ENCODE measurements at regions of chr12 and their contacts with region 1.

Region 1: DNA sequence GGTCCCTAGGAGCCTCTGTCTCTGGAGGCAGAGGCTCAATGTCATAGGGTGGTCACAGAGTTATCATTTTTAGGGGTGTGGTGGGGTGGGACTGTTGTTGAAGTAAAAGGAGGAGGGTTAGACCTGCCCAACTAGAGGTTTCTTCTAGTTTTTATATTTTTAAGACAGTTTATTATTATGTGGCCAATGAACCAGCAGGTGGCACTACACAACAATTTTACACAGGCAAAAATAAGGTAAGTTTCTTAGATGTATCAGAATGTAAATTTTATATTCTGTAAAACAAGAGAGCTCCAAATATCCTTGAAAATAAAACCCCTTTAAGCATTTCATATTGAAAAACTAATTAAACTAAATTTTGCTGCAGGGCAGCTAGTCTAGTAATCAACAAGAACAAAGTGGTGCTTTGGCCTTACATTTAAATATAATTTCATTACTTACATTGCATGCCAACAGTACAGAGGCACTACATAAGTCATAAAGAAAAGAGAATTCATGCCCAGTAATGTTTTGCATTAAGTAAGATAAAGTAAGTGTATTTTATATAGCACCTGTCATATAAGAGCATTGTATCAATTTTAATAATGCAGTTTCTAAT is 22.2 kb upstream of the OVCH1 start:
- DNase-seq: no peak
- ATAC-seq: peak; percentile 71
- H3K4me3 ChIP-seq: no peak overlapping the region
- H3K27ac ChIP-seq: no peak overlapping the region
- H3K4me1 ChIP-seq: no peaks in the 10 kb centered on the region
- H3K27me3 ChIP-seq: no peaks in the 10 kb centered on the region
- CTCF ChIP-seq: peak; percentile 40 to 66 (median 52); a peak in 5 of 6 replicates
- EP300 ChIP-seq: no peak
- POLR2A ChIP-seq: no peak
- RAD21 ChIP-seq: peak; percentile 71

Region 2: GRCh38 chr12:29309320-29309902 is 210.3 kb before region 1 on chr12:
- CTCF ChIA-PET with region 1: interaction called, 11 read pairs
- POLR2A ChIA-PET with region 1: no interaction called
- RAD21 ChIA-PET with region 1: no interaction called
- SMC1A ChIA-PET with region 1: interaction called, 3 read pairs
- in situ Hi-C with region 1: no loop called
- intact Hi-C with region 1: no loop called
- DNase-seq: no peak
- ATAC-seq: no peak
- H3K4me3 ChIP-seq: no peak overlapping the region
- H3K27ac ChIP-seq: no peak overlapping the region
- H3K4me1 ChIP-seq: no peaks in the 10 kb centered on the region
- H3K27me3 ChIP-seq: no peaks in the 10 kb centered on the region
- CTCF ChIP-seq: peak in 2 of 3 experiments; percentile 2 to 21; a peak in 1 of 6 replicates
- EP300 ChIP-seq: no peak
- POLR2A ChIP-seq: no peak
- RAD21 ChIP-seq: peak; percentile 47

Region 3: GRCh38 chr12:29437575-29437974 is 82.1 kb before region 1 on chr12:
- CTCF ChIA-PET with region 1: no interaction called
- POLR2A ChIA-PET with region 1: no interaction called
- RAD21 ChIA-PET with region 1: no interaction called
- SMC1A ChIA-PET with region 1: no interaction called
- in situ Hi-C with region 1: no loop called
- intact Hi-C with region 1: no loop called
- DNase-seq: no peak
- ATAC-seq: no peak
- H3K4me3 ChIP-seq: no peak overlapping the region
- H3K27ac ChIP-seq: no peak overlapping the region
- H3K4me1 ChIP-seq: no peaks in the 10 kb centered on the region
- H3K27me3 ChIP-seq: no peaks in the 10 kb centered on the region
- CTCF ChIP-seq: no peak
- EP300 ChIP-seq: no peak
- POLR2A ChIP-seq: no peak
- RAD21 ChIP-seq: no peak

Region 4: GRCh38 chr12:29545102-29545467 is 25.4 kb after region 1 on chr12:
- CTCF ChIA-PET with region 1: interaction called, 19 read pairs
- POLR2A ChIA-PET with region 1: no interaction called
- RAD21 ChIA-PET with region 1: interaction called, 13 read pairs
- SMC1A ChIA-PET with region 1: interaction called, 37 read pairs
- in situ Hi-C with region 1: no loop called
- intact Hi-C with region 1: no loop called
- DNase-seq: no peak
- ATAC-seq: peak; percentile 84
- H3K4me3 ChIP-seq: no peak overlapping the region
- H3K27ac ChIP-seq: no peak overlapping the region
- H3K4me1 ChIP-seq: peaks cover 5% of the 10 kb centered on the region
- H3K27me3 ChIP-seq: no peaks in the 10 kb centered on the region
- CTCF ChIP-seq: no peak
- EP300 ChIP-seq: no peak
- POLR2A ChIP-seq: no peak
- RAD21 ChIP-seq: no peak

Region 5: GRCh38 chr12:29901585-29901984 is 381.9 kb after region 1 on chr12:
- CTCF ChIA-PET with region 1: interaction called, 58 read pairs
- POLR2A ChIA-PET with region 1: no interaction called
- RAD21 ChIA-PET with region 1: interaction called, 23 read pairs
- SMC1A ChIA-PET with region 1: interaction called, 60 read pairs
- in situ Hi-C with region 1: no loop called
- intact Hi-C with region 1: no loop called
- DNase-seq: no peak
- ATAC-seq: no peak; the same call in 2 of the 3 replicates
- H3K4me3 ChIP-seq: no peak overlapping the region
- H3K27ac ChIP-seq: no peak overlapping the region
- H3K4me1 ChIP-seq: no peaks in the 10 kb centered on the region
- H3K27me3 ChIP-seq: no peaks in the 10 kb centered on the region
- CTCF ChIP-seq: peak in 1 of 3 experiments; percentile 38; a peak in 1 of 6 replicates
- EP300 ChIP-seq: no peak
- POLR2A ChIP-seq: no peak
- RAD21 ChIP-seq: no peak

Region 6: GRCh38 chr12:30286345-30286926 is 766.8 kb after region 1 on chr12:
- CTCF ChIA-PET with region 1: no interaction called
- POLR2A ChIA-PET with region 1: no interaction called
- RAD21 ChIA-PET with region 1: interaction called, 3 read pairs
- SMC1A ChIA-PET with region 1: interaction called, 4 read pairs
- in situ Hi-C with region 1: no loop called
- intact Hi-C with region 1: loop called (anchors 5 kb)
- DNase-seq: no peak
- ATAC-seq: peak; percentile 72
- H3K4me3 ChIP-seq: no peak overlapping the region
- H3K27ac ChIP-seq: no peak overlapping the region
- H3K4me1 ChIP-seq: no peaks in the 10 kb centered on the region
- H3K27me3 ChIP-seq: no peaks in the 10 kb centered on the region
- CTCF ChIP-seq: peak; percentile 24 to 52 (median 24); a peak in 3 of 6 replicates
- EP300 ChIP-seq: no peak
- POLR2A ChIP-seq: no peak
- RAD21 ChIP-seq: peak; percentile 57